Cardiac septum (tissue), 1 donor: ENCODE measurements at regions of chr5 and their contacts with region 1.

Region 1: GRCh38 chr5:72816311-72817145 is at the start of gene TNPO1:
- DNase-seq: peak; percentile 97
- total RNA-seq, gene TNPO1: 68.8 TPM

Region 2: GRCh38 chr5:72366324-72366976 is 450.1 kb before region 1 on chr5:
- intact Hi-C with region 1: loop called (anchors 1 kb)
- DNase-seq: peak; percentile 76

Region 3: GRCh38 chr5:72451741-72452505 is 364.6 kb before region 1 on chr5:
- intact Hi-C with region 1: loop called (anchors 5 kb)
- DNase-seq: peak; percentile 82

Region 4: GRCh38 chr5:72556351-72557166 is 260.0 kb before region 1 on chr5:
- intact Hi-C with region 1: loop called (anchors 5 kb)
- DNase-seq: peak; percentile 80

Region 5: GRCh38 chr5:72611118-72611730 is 205.3 kb before region 1 on chr5:
- intact Hi-C with region 1: loop called (anchors 2 kb)
- DNase-seq: peak; percentile 82

Region 6: DNA sequence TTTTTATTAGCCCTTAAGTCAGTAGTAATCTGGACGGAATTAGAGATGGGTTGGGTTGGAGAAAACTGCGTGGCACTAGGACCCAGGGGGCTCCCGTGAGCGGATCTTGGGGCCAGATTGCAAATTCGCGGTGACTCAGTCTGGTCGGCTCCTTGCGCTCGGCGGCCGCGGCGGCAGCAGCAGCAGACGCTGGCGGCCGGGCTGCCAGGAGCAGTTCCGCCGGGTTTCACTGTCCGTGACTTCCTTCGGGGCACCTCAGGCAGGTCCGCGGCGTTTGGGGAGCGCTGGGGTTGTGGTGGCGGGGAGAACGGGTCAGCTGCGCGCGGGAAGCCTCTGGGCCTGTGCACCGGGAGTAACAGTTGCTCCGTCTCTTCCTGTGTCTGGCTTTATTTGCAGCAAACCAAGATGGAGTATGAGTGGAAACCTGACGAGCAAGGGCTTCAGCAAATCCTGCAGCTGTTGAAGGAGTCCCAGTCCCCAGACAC is 31.5 kb after region 1 on chr5:
- intact Hi-C with region 1: loop called (anchors 1 kb)
- DNase-seq: peak; percentile 97

Region 7: DNA sequence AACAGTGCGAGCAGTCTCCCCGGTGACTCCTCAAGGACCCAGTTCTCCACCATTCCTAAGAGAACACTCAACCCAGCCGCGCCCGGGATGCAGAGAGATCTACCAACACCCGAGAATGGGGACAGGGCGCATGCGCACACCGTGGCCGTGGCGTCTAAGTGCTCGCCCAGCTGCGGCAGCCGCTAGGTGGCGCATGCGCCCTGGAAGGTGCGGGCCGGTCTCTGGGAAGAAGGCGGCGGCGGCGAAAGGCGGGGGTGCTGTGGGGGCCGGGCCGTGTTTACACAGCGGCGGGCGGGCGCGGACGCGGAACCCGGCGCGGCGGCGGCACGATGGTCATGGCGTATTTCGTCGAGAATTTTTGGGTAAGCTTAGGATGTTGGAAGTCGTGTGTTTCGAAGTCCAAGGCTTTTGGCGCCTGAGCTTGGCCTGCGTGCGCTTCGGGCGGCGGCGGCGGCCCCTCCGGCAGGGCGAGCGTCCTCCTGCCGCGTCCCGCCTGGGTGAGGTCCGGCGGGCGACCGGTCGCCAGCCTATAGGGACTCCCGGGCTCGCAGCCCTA is 139.3 kb after region 1 on chr5 and contains the start of gene FCHO2:
- intact Hi-C with region 1: loop called (anchors 2 kb)
- DNase-seq: peak; percentile 100
- total RNA-seq, gene FCHO2: 15.5 TPM